Lower lobe of right lung (tissue), 2 donors: ENCODE measurements at regions of chr10 and their contacts with region 1.

Region 1: DNA sequence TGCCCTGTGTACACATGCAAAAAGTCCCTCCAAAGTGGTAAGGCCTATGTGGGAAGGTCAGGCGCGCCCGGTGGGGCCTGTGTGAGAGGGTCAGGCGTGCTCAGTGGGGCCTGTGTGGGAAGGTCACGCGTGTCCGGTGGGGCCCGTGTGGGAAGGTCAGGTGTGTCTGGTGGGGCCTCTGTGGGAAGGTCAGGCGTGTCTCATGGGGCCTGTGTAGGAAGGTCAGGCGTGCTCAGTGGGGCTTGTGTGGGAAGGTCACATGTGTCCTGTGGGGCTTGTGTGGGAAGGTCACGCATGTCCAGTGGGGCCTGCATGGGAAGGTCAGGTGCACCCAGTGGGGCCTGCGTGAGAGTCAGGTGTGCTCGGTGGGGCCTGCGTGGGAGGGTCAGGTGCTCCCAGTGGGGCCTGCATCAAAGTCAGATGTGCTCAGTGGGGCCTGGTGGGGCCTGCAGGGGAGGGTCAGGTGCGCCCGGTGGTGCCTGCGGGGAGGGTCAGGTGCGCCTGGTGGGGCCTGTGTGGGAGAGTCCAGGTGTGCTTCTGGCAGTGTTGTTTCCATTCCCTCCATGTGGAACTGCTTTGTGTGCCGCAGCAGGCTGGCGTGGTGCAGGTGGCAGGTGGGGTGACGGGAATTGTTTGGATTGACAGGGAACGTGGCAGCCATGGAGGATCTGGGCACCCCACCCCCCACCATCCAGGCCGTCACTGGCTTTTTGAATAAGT is 15.4 kb downstream of the LRRC27 start:
- DNase-seq: no peak
- ATAC-seq: peak in 1 of 2 donors; percentile 29
- H3K4me3 ChIP-seq: no peak overlapping the region
- H3K27ac ChIP-seq: no peak overlapping the region
- H3K4me1 ChIP-seq: no peaks in the 10 kb centered on the region
- H3K27me3 ChIP-seq: no peaks in the 10 kb centered on the region
- CTCF ChIP-seq: no peak

Region 2: GRCh38 chr10:132223156-132223590 is 124.2 kb before region 1 on chr10:
- intact Hi-C with region 1: loop called (anchors 10 kb)
- DNase-seq: peak; percentile 83
- ATAC-seq: peak; percentile 89 to 91
- H3K4me3 ChIP-seq: no peak overlapping the region
- H3K27ac ChIP-seq: no peak overlapping the region
- H3K4me1 ChIP-seq: peaks cover 7% of the 10 kb centered on the region
- H3K27me3 ChIP-seq: no peaks in the 10 kb centered on the region
- CTCF ChIP-seq: peak; percentile 89